Kidney (tissue), 22 donors: ENCODE measurements at regions of chr20 and their contacts with region 1.

Region 1: GRCh38 chr20:45436732-45437391 is 20.9 kb downstream of the PIGT start:
- DNase-seq: peak; percentile 85 to 95 (median 89)
- H3K4me3 ChIP-seq: peak overlapping the region; percentile 28 to 80 (median 71)
- H3K27ac ChIP-seq: peak overlapping the region in 1 of 2 donors; percentile 52
- H3K4me1 ChIP-seq: no peaks in the 10 kb centered on the region
- H3K27me3 ChIP-seq: no peaks in the 10 kb centered on the region
- CTCF ChIP-seq: peak; percentile 97

Region 2: GRCh38 chr20:45322952-45323383 is 113.9 kb before region 1 on chr20:
- intact Hi-C with region 1: loop called (anchors 5 kb)
- DNase-seq: peak in 2 of 5 donors; percentile 31 to 51
- H3K4me3 ChIP-seq: no peak overlapping the region
- H3K27ac ChIP-seq: peak overlapping the region in 1 of 2 donors; percentile 43
- H3K4me1 ChIP-seq: peaks cover 0 to 2% (median 0%) of the 10 kb centered on the region in 3 donors
- H3K27me3 ChIP-seq: no peaks in the 10 kb centered on the region
- CTCF ChIP-seq: peak; percentile 48

Region 3: DNA sequence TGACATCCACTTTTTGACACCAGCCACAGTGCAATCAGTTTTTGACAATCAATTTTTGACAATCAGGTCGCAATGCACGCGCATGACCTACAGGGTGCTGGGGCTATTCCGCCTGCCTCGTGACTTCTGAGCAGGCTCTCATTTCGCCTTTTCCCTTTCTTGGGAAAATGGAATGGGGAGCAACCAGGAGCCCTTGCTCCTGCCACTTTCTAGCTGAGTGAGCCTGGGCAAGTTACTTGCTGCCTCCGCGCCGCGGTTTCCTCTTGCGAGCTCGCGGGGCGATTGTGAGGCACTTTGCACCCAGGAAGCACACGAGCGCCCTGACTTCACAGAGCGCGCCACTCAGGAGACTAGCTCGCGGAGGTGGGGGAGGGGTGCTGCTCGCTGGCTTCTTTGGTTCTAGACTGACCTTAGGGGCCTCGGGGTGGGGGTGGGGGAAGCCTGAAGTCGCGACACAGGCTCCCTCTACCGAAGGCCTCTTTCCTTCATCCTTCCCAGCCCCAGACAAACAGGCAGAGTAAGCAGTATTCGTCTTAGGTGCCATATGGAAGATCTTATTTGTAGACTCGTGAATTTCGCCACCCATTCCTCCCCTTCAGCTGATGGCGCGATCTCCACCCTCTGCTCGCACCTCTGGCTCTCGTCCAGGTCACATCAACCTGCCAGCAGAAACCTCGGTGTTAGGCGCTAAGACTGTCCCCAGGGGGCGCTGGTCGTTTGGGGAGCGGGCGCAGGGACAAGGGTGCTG is 63.3 kb before region 1 on chr20:
- intact Hi-C with region 1: loop called (anchors 10 kb)
- DNase-seq: peak; percentile 88 to 95 (median 92)
- H3K4me3 ChIP-seq: peak overlapping the region; percentile 57 to 85 (median 79)
- H3K27ac ChIP-seq: no peak overlapping the region
- H3K4me1 ChIP-seq: peaks cover 0 to 16% (median 8%) of the 10 kb centered on the region in 3 donors
- H3K27me3 ChIP-seq: no peaks in the 10 kb centered on the region
- CTCF ChIP-seq: peak; percentile 81